Activated CD4-positive, alpha-beta T cell treated with anti-CD3 and anti-CD28 coated beads for 36 hours (primary cell): ENCODE measurements at regions of chr14 and their contacts with region 1.

Region 1: DNA sequence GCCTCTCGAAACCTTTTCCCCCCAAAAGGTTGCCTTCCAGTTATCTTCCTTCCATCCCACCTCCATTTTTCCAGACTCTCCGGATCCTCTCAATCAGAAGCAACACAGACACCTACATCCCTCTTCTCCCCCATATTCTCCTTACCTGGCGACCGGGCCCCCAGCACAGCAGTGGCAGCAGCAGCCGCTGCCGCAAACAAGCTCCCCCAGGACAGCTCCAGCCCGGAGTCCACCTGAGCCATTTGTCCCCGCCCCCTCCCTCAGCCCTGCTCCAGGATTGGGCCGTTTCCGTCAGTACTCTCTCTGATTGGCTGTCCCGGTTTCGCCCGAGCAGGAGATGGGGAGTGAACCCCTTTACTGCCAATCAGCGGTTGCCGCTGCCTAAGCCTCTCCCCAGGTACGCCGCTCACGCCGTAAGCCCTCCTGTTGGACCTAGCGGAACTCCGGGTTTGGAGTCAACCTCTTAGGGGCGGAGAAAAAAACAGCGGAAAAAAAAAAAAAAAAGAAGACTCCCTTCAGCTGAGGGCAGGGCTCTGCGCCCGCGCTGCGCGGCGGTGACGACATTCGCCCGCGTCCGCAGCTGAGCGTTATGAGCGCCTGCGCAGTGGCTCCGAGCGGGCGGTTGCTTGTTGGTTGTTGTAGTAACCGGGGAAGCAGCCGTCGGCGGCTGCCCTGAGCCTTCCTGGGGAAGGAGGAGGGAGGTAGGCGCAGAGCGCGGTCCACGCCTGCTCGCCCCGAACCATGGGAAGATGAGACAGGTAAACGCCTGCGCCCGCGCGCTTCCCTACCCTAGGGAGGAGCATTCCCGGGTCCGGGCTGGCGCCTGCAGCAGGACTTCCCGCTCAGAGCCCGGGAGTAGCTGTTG is at the starts of genes ERG28 and TTLL5:
- DNase-seq: peak; percentile 97
- ATAC-seq: peak; percentile 99
- H3K4me3 Mint-ChIP-seq: peak within 1 kb of the TSS; percentile 96
- H3K27ac Mint-ChIP-seq: peak within 1 kb of the TSS; percentile 99
- H3K4me1 Mint-ChIP-seq: peaks cover 17% of the 10 kb centered on the region
- H3K27me3 Mint-ChIP-seq: no peaks in the 10 kb centered on the region
- total RNA-seq, gene ERG28: 19.1 to 23.7 TPM
- total RNA-seq, gene TTLL5: 27.3 to 38.6 TPM

Region 2: GRCh38 chr14:74881431-74882361 is 779.2 kb before region 1 on chr14 and contains the start of gene DLST:
- CTCF ChIA-PET with region 1: no interaction called
- POLR2A ChIA-PET with region 1: no interaction called
- intact Hi-C with region 1: loop called in 1 of 2 experiments (anchors 5 kb)
- DNase-seq: peak; percentile 92
- ATAC-seq: peak; percentile 89
- H3K4me3 Mint-ChIP-seq: peak within 1 kb of the TSS; percentile 99
- H3K27ac Mint-ChIP-seq: peak within 1 kb of the TSS; percentile 96
- H3K4me1 Mint-ChIP-seq: peaks cover 64% of the 10 kb centered on the region
- H3K27me3 Mint-ChIP-seq: no peaks in the 10 kb centered on the region
- total RNA-seq, gene DLST: 103 to 120 TPM

Region 3: DNA sequence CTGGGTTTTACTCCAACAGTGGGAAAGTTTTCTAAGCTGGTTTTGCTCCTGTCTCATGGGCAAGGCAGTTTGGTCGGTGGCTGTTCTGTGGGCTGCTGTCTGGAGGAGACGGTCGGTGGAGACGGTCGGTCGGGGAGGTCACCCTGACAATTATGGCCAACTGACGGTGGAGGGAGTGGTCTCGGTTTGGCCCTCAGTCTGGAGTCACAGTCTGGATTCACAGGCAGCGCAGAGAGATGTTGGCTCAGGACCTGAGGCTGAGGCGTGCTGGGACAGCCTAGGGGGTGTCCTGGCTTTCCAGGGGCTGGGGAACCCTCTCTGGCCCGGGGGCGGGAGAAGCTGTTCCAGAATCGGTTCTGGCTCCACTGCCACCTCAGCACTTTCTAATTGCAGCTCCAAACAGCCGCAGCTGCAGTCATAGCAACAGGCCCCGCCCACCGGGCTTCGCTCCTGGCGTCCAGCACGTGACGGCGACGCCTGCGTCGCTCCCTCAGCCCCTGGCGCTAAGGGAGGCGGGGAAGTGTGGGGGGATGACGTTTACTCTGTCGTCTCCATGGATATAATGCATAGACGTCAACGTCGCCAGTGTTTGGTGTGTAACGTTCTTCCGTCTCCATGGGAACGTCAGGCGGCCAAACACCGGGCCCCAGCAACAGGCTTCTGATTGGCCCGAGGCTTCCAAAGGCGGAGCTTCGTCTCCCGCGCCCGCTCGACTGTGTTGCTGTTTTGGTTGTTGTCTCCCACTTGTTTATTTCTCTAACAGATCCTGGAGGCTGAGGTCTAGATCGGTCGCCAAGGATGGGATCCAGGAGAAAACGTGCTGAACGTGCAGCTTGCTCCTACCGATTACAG is 402.0 kb before region 1 on chr14:
- CTCF ChIA-PET with region 1: no interaction called
- POLR2A ChIA-PET with region 1: no interaction called
- intact Hi-C with region 1: loop called in 1 of 2 experiments (anchors 2 kb)
- DNase-seq: peak; percentile 99
- ATAC-seq: peak; percentile 98
- H3K4me3 Mint-ChIP-seq: peak overlapping the region; percentile 77
- H3K27ac Mint-ChIP-seq: peak overlapping the region; percentile 97
- H3K4me1 Mint-ChIP-seq: peaks cover 24% of the 10 kb centered on the region
- H3K27me3 Mint-ChIP-seq: no peaks in the 10 kb centered on the region

Region 4: GRCh38 chr14:75522224-75522982 is 138.5 kb before region 1 on chr14 and contains the start of gene BATF:
- CTCF ChIA-PET with region 1: interaction called, 3 read pairs
- POLR2A ChIA-PET with region 1: no interaction called
- intact Hi-C with region 1: loop called (anchors 1 to 10 kb)
- DNase-seq: peak; percentile 87
- ATAC-seq: peak; percentile 60
- H3K4me3 Mint-ChIP-seq: peak within 1 kb of the TSS; percentile 100
- H3K27ac Mint-ChIP-seq: peak within 1 kb of the TSS; percentile 100
- H3K4me1 Mint-ChIP-seq: peaks cover 68% of the 10 kb centered on the region
- H3K27me3 Mint-ChIP-seq: no peaks in the 10 kb centered on the region
- total RNA-seq, gene BATF: 165 to 187 TPM

Region 5: DNA sequence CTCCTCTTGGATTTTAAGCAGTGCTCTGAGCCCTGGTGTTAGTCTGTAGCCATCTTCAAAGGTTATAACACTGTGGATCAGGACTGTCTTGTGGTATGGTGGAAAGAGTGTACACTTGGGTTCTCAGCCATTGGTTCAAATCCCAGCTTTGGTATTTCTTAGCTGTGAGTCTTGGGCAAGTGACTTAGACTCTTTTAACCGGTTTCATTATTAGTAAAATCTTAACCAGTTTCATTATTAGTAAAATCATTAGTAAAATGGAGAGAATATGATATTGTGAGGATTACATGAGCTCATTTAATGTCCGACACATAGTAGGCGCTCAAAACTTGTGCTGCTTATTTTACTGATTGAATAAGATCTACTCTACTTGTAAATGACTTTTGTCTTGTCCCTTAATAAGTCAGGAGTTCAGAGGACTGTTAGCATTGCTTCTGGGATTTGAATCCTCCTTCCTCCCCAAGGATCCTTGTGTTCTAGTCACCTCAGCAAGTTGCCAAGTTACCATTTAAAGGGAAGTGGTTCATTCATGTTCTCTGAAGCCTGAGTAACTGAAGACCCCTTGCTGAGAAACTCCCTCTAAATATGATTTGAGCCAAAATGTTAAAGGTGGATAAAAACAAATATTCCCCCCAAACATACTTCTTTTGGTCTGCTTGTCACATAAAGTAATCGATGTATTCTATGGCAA is 12.6 kb after region 1 on chr14:
- CTCF ChIA-PET with region 1: interaction called, 3 read pairs
- POLR2A ChIA-PET with region 1: no interaction called
- intact Hi-C with region 1: loop called in 1 of 2 experiments (anchors 1 kb)
- DNase-seq: no peak
- ATAC-seq: peak; percentile 91
- H3K4me3 Mint-ChIP-seq: no peak overlapping the region
- H3K27ac Mint-ChIP-seq: peak overlapping the region; percentile 60
- H3K4me1 Mint-ChIP-seq: peaks cover 27% of the 10 kb centered on the region
- H3K27me3 Mint-ChIP-seq: no peaks in the 10 kb centered on the region

Region 6: GRCh38 chr14:75794615-75795038 is 133.8 kb after region 1 on chr14:
- CTCF ChIA-PET with region 1: no interaction called
- POLR2A ChIA-PET with region 1: no interaction called
- intact Hi-C with region 1: no loop called
- DNase-seq: no peak
- ATAC-seq: no peak
- H3K4me3 Mint-ChIP-seq: no peak overlapping the region
- H3K27ac Mint-ChIP-seq: no peak overlapping the region
- H3K4me1 Mint-ChIP-seq: no peaks in the 10 kb centered on the region
- H3K27me3 Mint-ChIP-seq: no peaks in the 10 kb centered on the region

Region 7: GRCh38 chr14:76812211-76813044 is 1151.6 kb after region 1 on chr14 and contains the start of gene ANGEL1:
- CTCF ChIA-PET with region 1: no interaction called
- POLR2A ChIA-PET with region 1: no interaction called
- intact Hi-C with region 1: loop called in 1 of 2 experiments (anchors 2 kb)
- DNase-seq: peak; percentile 98
- ATAC-seq: peak; percentile 90
- H3K4me3 Mint-ChIP-seq: peak within 1 kb of the TSS; percentile 97
- H3K27ac Mint-ChIP-seq: peak within 1 kb of the TSS; percentile 93
- H3K4me1 Mint-ChIP-seq: peaks cover 27% of the 10 kb centered on the region
- H3K27me3 Mint-ChIP-seq: no peaks in the 10 kb centered on the region
- total RNA-seq, gene ANGEL1: 15.8 to 17.2 TPM